Posterior cingulate gyrus (tissue), 11 donors: ENCODE measurements at regions of chr17 and their contacts with region 1.

Region 1: GRCh38 chr17:68771867-68772515 is 170.8 kb upstream of the FAM20A start:
- DNase-seq: peak in 1 of 10 donors; percentile 33

Region 2: GRCh38 chr17:69246726-69247375 is 474.9 kb after region 1 on chr17:
- intact Hi-C with region 1: loop called (anchors 2 kb)
- DNase-seq: no peak